Right ventricle myocardium inferior (tissue), 1 donor: ENCODE measurements at regions of chr4 and their contacts with region 1.

Region 1: GRCh38 chr4:20684852-20685763 is 15.2 kb upstream of the PACRGL start:
- DNase-seq: no peak
- ATAC-seq: no peak

Region 2: GRCh38 chr4:18689308-18690115 is 1995.6 kb before region 1 on chr4:
- intact Hi-C with region 1: loop called (anchors 10 kb)
- DNase-seq: no peak
- ATAC-seq: peak; percentile 46

Region 3: DNA sequence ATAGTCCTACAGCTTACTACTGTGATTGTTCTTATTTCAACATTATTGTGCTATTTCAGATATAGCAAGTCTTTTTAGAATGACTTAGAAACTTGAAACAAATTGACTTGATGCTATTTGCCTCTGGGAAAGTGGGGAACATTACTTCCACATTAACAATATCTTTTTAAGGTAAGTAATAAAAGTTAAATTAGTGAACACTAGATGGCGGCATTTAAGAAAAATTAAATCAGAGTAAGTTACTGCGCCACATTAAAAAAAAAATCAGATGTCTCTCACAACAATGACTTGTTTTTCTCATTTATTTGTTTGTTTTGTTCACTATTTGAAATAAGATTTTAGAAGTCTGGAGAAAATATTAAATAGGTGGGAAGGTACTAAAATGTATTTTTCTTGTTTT is 1460.3 kb before region 1 on chr4:
- intact Hi-C with region 1: loop called (anchors 10 kb)
- DNase-seq: no peak
- ATAC-seq: no peak

Region 4: GRCh38 chr4:20422398-20422797 is 262.7 kb before region 1 on chr4:
- intact Hi-C with region 1: loop called (anchors 10 kb)
- DNase-seq: no peak
- ATAC-seq: peak; percentile 62

Region 5: GRCh38 chr4:20617678-20618396 is 67.3 kb before region 1 on chr4:
- intact Hi-C with region 1: no loop called
- DNase-seq: no peak
- ATAC-seq: no peak